ENCODE measurements at regions of chr3 and their contacts with region 1.

Region 1: GRCh38 chr3:48595526-48596121 is 495 bp upstream of the COL7A1 start:
- DNase-seq: peak; percentile 85
- H3K4me3 Mint-ChIP-seq: peak overlapping the region; percentile 48
- H3K27ac Mint-ChIP-seq: peak overlapping the region; percentile 68
- H3K4me1 Mint-ChIP-seq: peaks cover 51% of the 10 kb centered on the region
- H3K27me3 Mint-ChIP-seq: no peaks in the 10 kb centered on the region
- CTCF ChIP-seq: no peak

Region 2: GRCh38 chr3:47705391-47705790 is 890.2 kb before region 1 on chr3:
- CTCF ChIA-PET with region 1: no interaction called
- POLR2A ChIA-PET with region 1: no interaction called
- intact Hi-C with region 1: no loop called
- DNase-seq: no peak
- H3K4me3 Mint-ChIP-seq: no peak overlapping the region
- H3K27ac Mint-ChIP-seq: no peak overlapping the region
- H3K4me1 Mint-ChIP-seq: peaks cover 6% of the 10 kb centered on the region
- H3K27me3 Mint-ChIP-seq: no peaks in the 10 kb centered on the region
- CTCF ChIP-seq: no peak

Region 3: DNA sequence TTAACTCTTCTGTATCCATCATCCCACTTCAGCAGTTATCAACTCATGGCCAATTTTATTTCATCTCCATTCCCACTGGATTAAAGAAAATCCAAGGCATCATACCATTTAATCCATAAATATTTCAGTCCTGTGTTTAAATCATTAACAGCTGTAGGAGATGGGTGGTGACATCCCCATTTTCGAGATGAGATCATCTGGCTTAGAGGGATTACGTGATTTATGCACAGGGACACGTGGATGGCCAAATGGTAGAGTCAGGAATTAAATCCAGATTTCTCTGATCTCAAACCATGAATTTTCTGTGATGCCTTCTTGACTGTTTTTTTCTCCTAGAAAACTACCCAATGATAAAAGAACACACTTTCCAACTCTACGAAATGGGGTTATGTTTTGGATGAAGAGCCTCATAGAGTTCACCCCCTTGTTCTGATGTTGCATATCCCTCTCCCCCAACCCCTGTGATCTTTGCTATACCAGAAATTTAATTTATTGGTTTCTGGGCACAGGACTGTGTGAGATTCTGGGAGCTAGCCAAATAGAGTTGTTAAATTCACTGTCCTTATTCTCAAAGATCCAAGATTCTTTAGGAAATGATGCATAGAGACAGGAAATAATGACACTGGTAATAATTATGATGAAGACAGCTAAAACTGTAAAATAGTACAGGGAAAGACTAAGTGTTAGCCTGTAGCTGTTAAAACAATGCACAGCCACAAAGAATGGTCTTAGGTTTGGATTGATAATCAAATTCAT is 347.4 kb before region 1 on chr3:
- CTCF ChIA-PET with region 1: no interaction called
- POLR2A ChIA-PET with region 1: no interaction called
- intact Hi-C with region 1: no loop called
- DNase-seq: no peak
- H3K4me3 Mint-ChIP-seq: no peak overlapping the region
- H3K27ac Mint-ChIP-seq: no peak overlapping the region
- H3K4me1 Mint-ChIP-seq: no peaks in the 10 kb centered on the region
- H3K27me3 Mint-ChIP-seq: no peaks in the 10 kb centered on the region
- CTCF ChIP-seq: no peak

Region 4: DNA sequence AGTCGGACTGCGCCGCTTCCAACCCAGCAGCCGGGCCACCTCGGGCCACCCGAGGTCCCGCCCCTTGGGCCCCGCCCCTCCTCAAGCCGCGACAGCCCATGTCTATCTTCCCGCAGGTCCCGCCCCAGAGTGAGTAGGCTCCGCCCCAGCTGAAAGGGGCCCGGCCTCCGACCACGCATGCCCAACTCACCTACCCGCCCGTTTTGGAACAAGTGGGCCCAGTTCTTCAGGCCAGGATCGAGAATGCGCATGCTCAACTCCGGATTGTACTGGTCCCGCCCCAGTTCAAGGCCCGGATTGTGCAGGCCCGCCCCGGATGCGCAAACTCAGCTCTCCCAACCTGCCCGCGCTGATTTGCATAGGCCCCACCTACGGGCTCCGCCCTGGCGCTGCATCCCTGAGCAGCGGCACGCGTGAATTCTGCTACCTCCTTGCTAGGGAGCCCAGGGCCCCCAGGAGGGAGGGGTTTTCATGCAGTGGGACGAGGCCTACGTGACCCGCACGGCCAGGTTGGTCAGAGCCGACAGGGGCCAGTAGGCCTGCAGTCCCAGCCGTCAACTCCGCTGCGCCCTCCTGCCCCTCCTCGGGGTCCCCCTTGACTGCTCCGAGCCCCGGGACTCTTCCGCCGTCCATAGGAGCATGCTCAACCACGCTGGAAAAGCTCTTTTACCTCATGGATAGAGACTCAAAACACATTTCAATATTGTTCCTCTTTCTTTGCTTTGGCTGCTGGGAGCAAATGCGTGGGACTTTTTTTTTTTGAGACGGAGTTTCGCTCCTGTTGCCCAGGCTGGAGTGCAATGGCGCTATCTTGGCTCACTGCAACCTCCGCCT is 38.6 kb before region 1 on chr3 and contains the start of gene PFKFB4:
- CTCF ChIA-PET with region 1: interaction called, 11 read pairs
- POLR2A ChIA-PET with region 1: interaction called, 38 read pairs
- intact Hi-C with region 1: loop called (anchors 2 kb)
- DNase-seq: peak; percentile 99
- H3K4me3 Mint-ChIP-seq: peak within 1 kb of the TSS; percentile 74
- H3K27ac Mint-ChIP-seq: peak within 1 kb of the TSS; percentile 47
- H3K4me1 Mint-ChIP-seq: peaks cover 11% of the 10 kb centered on the region
- H3K27me3 Mint-ChIP-seq: no peaks in the 10 kb centered on the region
- CTCF ChIP-seq: no peak
- total RNA-seq, gene PFKFB4: 3.4 and 4.6 TPM in 2 replicates

Region 5: DNA sequence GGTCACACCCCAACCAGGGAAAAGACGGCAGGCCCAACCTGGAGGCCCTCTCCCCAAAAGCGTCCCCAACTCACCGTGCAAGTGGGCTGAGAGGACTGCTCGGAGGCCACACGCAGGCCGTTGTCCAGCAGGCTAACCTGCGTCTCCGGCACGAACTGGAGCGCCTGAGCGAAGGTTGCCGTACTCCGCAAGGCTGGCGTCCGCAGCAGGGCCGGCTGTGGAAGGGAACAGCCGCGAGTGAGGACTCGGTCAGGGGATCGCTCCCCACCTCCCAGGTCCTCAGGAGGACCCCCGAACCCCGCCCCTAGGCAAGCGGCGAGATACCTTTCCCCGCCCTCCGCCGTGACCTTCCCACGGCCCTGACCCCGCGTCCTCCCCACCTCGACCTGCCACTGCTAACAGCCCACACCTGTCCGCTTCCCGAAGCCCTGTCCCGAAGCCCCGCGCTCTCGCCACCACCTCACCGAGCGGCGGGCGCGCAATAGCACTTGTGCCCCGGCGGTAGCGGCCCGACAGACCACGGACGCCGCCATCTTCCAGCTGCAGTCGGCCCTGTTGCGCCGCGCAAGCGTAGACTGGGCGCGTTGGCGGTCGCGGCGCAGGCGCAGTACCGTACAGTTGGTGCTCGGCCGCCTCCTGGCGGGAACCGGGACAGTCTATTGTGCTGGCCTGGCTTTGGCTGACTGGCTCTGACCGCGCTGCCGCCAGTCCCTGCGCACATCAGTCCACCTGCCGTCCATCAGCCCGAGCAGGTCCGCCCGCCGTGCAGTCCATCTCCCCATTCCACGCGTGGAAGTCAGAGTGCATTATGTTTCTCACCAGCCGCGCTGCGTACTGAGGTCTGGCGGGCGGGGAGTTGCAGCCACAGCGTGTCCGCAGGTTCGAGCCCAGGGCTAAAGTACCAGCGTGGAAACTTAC is 13.7 kb after region 1 on chr3 and contains the start of gene UQCRC1:
- CTCF ChIA-PET with region 1: interaction called, 9 read pairs
- POLR2A ChIA-PET with region 1: interaction called, 107 read pairs
- intact Hi-C with region 1: no loop called
- DNase-seq: peak; percentile 91
- H3K4me3 Mint-ChIP-seq: peak within 1 kb of the TSS; percentile 94
- H3K27ac Mint-ChIP-seq: peak within 1 kb of the TSS; percentile 94
- H3K4me1 Mint-ChIP-seq: peaks cover 18% of the 10 kb centered on the region
- H3K27me3 Mint-ChIP-seq: no peaks in the 10 kb centered on the region
- CTCF ChIP-seq: peak; percentile 47
- total RNA-seq, gene UQCRC1: 383 and 413 TPM in 2 replicates

Region 6: GRCh38 chr3:48635222-48636021 is 39.8 kb after region 1 on chr3 and contains the start of gene SLC26A6:
- CTCF ChIA-PET with region 1: interaction called, 22 read pairs
- POLR2A ChIA-PET with region 1: interaction called, 93 read pairs
- intact Hi-C with region 1: no loop called
- DNase-seq: peak; percentile 98
- H3K4me3 Mint-ChIP-seq: peak within 1 kb of the TSS; percentile 84
- H3K27ac Mint-ChIP-seq: peak within 1 kb of the TSS; percentile 85
- H3K4me1 Mint-ChIP-seq: peaks cover 10% of the 10 kb centered on the region
- H3K27me3 Mint-ChIP-seq: no peaks in the 10 kb centered on the region
- CTCF ChIP-seq: peak; percentile 48
- total RNA-seq, gene SLC26A6: 47.4 and 63.3 TPM in 2 replicates

Region 7: DNA sequence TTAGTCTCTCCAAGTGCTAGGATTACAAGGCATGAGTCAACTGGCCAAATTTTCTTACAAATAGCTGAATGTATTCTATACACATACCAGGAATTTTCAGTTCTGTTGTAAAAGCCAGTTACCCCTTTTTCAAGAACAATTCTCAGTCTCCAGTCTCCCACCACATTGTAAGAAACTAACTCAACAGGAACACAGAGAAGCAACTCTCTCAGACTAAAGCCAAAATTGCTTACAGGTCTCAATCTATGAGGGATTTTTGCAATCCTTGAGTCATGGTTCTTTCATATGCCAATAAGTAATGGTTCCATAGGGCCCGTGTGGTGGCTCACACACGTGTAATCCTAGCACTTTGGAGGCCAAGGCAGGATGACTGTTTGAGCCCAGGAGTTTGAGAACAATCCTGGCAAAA is 112.9 kb after region 1 on chr3:
- CTCF ChIA-PET with region 1: interaction called, 4 read pairs
- POLR2A ChIA-PET with region 1: interaction called, 13 read pairs
- intact Hi-C with region 1: no loop called
- DNase-seq: peak; percentile 72
- H3K4me3 Mint-ChIP-seq: peak overlapping the region; percentile 53
- H3K27ac Mint-ChIP-seq: peak overlapping the region; percentile 96
- H3K4me1 Mint-ChIP-seq: peaks cover 21% of the 10 kb centered on the region
- H3K27me3 Mint-ChIP-seq: no peaks in the 10 kb centered on the region
- CTCF ChIP-seq: no peak

Measured in MCF 10A (cell line).